Activated CD8-positive, alpha-beta T cell treated with anti-CD3 and anti-CD28 coated beads for 36 hours (primary cell): ENCODE measurements at regions of chr6 and their contacts with region 1.

Region 1: DNA sequence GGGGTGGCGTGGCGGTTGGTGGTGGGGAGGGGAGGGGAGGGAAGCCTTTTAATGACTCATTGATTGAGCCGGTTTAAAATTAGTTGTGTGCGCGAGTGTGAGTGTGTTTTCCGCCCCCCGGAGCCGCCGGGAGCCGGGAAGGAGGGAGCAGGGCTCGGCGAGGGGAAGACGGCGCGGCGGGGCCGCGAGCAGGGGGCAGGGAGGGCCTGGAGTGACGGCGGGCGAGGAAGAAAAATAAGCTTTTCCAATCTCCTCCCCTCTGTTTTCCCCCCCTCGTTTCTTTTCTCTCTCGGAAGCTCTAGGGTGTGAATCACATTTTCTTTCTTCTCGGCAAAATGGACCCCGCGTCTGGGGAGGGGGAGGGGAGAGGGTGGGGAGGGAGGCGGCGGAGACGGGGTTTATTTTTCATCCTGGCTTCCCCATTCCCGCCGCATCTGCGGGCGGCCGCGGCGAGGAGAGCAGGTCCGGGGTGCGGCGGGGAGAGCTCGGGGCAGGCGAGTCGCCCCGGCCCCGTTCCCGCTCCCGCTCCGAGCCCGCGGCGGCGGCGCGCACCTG is 847 bp downstream of the BICRAL start:
- DNase-seq: peak; percentile 73
- ATAC-seq: peak; percentile 60
- H3K4me3 Mint-ChIP-seq: peak overlapping the region; percentile 75
- H3K27ac Mint-ChIP-seq: peak overlapping the region; percentile 100
- H3K4me1 Mint-ChIP-seq: peaks cover 35% of the 10 kb centered on the region
- H3K27me3 Mint-ChIP-seq: no peaks in the 10 kb centered on the region
- CTCF ChIP-seq: no peak

Region 2: DNA sequence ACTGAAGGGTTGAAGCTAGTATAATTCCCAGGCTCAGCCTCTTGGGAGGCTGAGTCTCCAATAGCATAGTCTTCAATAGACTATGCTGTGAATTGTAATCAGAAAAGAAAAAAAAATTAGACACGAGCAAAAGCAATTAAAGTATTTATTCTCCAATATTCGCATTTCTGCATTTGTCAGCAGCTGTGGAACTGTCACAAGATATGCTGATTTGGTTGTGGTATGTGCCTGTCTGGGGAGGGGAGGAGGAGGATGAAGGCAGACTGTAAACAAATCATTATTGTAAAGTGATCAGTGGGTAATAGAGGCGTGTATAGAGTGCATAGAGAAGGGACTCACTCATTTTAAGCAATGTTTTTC is 11.0 kb before region 1 on chr6:
- CTCF ChIA-PET with region 1: interaction called, 4 read pairs
- POLR2A ChIA-PET with region 1: interaction called, 166 read pairs
- intact Hi-C with region 1: no loop called
- DNase-seq: no peak
- ATAC-seq: no peak
- H3K4me3 Mint-ChIP-seq: peak overlapping the region; percentile 74
- H3K27ac Mint-ChIP-seq: peak overlapping the region; percentile 100
- H3K4me1 Mint-ChIP-seq: peaks cover 53% of the 10 kb centered on the region
- H3K27me3 Mint-ChIP-seq: no peaks in the 10 kb centered on the region
- CTCF ChIP-seq: no peak